ENCODE measurements at regions of chr19 and their contacts with region 1.

Region 1: DNA sequence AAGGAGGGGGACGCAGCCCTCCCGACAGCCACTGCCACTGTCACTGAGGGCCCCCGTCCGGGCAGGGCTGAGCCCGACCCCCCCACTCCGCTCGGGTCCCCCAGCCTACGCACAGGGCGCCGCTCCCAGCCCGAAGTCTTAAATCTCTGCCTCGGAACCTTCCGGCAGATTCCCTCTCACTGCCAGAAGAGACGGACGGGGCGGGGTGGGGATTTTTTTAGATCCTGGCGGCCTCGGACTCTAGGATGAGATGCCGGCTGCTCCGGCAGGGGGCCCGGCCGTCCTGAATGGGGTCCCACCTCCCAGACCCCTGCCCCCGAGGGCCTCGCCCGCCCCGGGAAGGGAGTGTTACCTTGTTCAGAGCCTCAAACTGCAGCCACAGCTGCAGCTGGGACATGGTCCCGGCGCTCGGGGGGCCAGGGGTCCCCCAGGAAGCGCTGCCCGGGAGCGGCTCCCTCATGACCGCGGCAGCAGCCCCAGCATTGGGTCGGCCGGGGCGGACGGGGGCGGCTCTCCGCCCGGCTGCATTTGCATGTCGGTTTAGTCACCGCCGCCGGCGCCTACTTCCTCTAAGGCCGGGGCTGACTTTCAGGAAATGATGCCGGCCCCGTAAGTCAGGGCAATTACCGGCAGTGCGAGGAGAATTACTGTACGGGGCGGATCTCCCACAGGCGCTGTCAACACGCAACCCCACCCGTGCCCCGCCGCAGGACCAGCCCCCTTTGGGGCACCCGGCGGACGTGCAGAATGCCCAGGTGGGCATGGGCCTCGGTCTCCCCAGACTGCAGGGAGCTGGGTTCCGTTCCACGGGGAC is 28.2 kb downstream of the GPX4 start:
- DNase-seq: no peak
- H3K4me3 ChIP-seq: peak overlapping the region; percentile 67 to 73
- H3K27ac ChIP-seq: peak overlapping the region; percentile 87
- H3K4me1 ChIP-seq: peaks cover 92% of the 10 kb centered on the region
- H3K27me3 ChIP-seq: no peaks in the 10 kb centered on the region
- CTCF ChIP-seq: no peak
- POLR2A ChIP-seq: peak in 1 of 2 donors; percentile 9

Region 2: GRCh38 chr19:1173845-1174809 is 42.2 kb after region 1 on chr19 and contains the start of gene SBNO2:
- intact Hi-C with region 1: loop called (anchors 5 kb)
- DNase-seq: peak in 1 of 2 donors; percentile 89
- H3K4me3 ChIP-seq: peak within 1 kb of the TSS; percentile 57 to 77
- H3K27ac ChIP-seq: peak within 1 kb of the TSS; percentile 95
- H3K4me1 ChIP-seq: peaks cover 63% of the 10 kb centered on the region
- H3K27me3 ChIP-seq: no peaks in the 10 kb centered on the region
- CTCF ChIP-seq: no peak
- POLR2A ChIP-seq: peak in 1 of 2 donors; percentile 66
- total RNA-seq, gene SBNO2: 54.0 TPM

Measured in vagina (tissue), 2 donors.